Endothelial cell of umbilical vein (primary cell): ENCODE measurements at regions of chr7 and their contacts with region 1.

Region 1: DNA sequence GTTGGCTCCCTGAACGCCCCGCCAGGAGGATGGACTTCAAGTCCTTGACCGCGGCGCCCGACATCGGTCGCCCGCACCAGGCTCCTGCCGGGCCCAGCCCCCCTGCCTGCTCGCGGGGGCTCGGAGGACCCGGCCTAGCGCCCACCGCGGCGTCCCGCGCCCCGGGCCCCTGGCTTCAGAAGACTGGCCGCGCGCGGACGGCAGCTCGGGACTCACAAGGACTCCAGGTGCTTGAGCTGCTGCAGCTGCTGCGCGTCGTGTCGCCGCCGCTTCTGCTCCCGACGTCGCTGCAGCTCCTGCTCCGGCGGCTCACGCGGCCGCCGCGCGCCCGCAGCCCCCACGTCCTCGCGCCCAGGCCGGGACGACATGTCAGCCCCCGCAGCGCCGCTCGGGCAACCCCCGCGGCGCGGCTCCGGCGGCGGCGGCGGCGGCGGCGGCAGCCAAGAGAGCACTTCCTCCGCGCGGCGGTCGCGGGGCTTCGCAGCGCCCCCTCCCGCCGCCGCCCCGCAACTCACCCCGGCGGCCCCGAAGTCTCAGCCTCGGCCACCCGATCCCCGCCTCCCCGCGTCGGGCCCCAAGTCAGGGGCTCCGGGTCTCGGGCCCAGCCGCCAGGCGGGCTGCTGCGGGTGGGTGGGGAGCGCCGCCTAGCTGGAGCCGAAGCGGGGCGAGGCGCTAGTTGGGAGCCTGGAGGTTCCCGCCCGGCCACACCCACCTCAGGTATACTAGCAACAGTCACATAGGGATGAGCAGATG is at the start of gene RP9:
- DNase-seq: peak; percentile 70
- H3K4me3 ChIP-seq: peak within 1 kb of the TSS; percentile 56 to 93 (median 75)
- H3K27ac ChIP-seq: peak within 1 kb of the TSS; percentile 40
- H3K4me1 ChIP-seq: peaks cover 21% of the 10 kb centered on the region
- H3K27me3 ChIP-seq: peaks cover 4 to 18% of the 10 kb centered on the region in 2 experiments
- CTCF ChIP-seq: peak; percentile 41 to 58
- POLR2A ChIP-seq: peak; percentile 46
- total RNA-seq, gene RP9: 18.5 and 20.9 TPM in 2 replicates

Region 2: GRCh38 chr7:32694182-32694581 is 415.0 kb before region 1 on chr7:
- CTCF ChIA-PET with region 1: interaction called, 20 read pairs
- POLR2A ChIA-PET with region 1: no interaction called
- dilution Hi-C with region 1: no loop called
- intact Hi-C with region 1: loop called (anchors 5 kb)
- DNase-seq: no peak
- H3K4me3 ChIP-seq: no peak overlapping the region
- H3K27ac ChIP-seq: no peak overlapping the region
- H3K4me1 ChIP-seq: no peaks in the 10 kb centered on the region
- H3K27me3 ChIP-seq: no peaks in the 10 kb centered on the region
- CTCF ChIP-seq: no peak
- POLR2A ChIP-seq: no peak

Region 3: GRCh38 chr7:32803406-32804141 is 305.6 kb before region 1 on chr7:
- CTCF ChIA-PET with region 1: interaction called, 35 read pairs
- POLR2A ChIA-PET with region 1: no interaction called
- dilution Hi-C with region 1: no loop called
- intact Hi-C with region 1: loop called (anchors 1 kb)
- DNase-seq: no peak
- H3K4me3 ChIP-seq: no peak overlapping the region
- H3K27ac ChIP-seq: no peak overlapping the region
- H3K4me1 ChIP-seq: no peaks in the 10 kb centered on the region
- H3K27me3 ChIP-seq: no peaks in the 10 kb centered on the region
- CTCF ChIP-seq: no peak
- POLR2A ChIP-seq: no peak

Region 4: GRCh38 chr7:32891800-32892520 is 217.2 kb before region 1 on chr7:
- CTCF ChIA-PET with region 1: interaction called, 4 read pairs
- POLR2A ChIA-PET with region 1: no interaction called
- dilution Hi-C with region 1: no loop called
- intact Hi-C with region 1: loop called (anchors 1 kb)
- DNase-seq: peak; percentile 96
- H3K4me3 ChIP-seq: peak overlapping the region in 2 of 3 experiments; percentile 68 to 90
- H3K27ac ChIP-seq: peak overlapping the region; percentile 99
- H3K4me1 ChIP-seq: peaks cover 46% of the 10 kb centered on the region
- H3K27me3 ChIP-seq: no peaks in the 10 kb centered on the region
- CTCF ChIP-seq: no peak
- POLR2A ChIP-seq: no peak

Region 5: GRCh38 chr7:32957326-32958045 is 151.7 kb before region 1 on chr7 and contains the start of gene FKBP9:
- CTCF ChIA-PET with region 1: interaction called, 15 read pairs
- POLR2A ChIA-PET with region 1: no interaction called
- dilution Hi-C with region 1: no loop called
- intact Hi-C with region 1: loop called (anchors 2 kb)
- DNase-seq: peak; percentile 82
- H3K4me3 ChIP-seq: peak within 1 kb of the TSS; percentile 50 to 89 (median 73)
- H3K27ac ChIP-seq: peak within 1 kb of the TSS; percentile 78
- H3K4me1 ChIP-seq: peaks cover 10% of the 10 kb centered on the region
- H3K27me3 ChIP-seq: no peaks in the 10 kb centered on the region
- CTCF ChIP-seq: no peak
- POLR2A ChIP-seq: peak; percentile 92
- total RNA-seq, gene FKBP9: 112 and 124 TPM in 2 replicates

Region 6: DNA sequence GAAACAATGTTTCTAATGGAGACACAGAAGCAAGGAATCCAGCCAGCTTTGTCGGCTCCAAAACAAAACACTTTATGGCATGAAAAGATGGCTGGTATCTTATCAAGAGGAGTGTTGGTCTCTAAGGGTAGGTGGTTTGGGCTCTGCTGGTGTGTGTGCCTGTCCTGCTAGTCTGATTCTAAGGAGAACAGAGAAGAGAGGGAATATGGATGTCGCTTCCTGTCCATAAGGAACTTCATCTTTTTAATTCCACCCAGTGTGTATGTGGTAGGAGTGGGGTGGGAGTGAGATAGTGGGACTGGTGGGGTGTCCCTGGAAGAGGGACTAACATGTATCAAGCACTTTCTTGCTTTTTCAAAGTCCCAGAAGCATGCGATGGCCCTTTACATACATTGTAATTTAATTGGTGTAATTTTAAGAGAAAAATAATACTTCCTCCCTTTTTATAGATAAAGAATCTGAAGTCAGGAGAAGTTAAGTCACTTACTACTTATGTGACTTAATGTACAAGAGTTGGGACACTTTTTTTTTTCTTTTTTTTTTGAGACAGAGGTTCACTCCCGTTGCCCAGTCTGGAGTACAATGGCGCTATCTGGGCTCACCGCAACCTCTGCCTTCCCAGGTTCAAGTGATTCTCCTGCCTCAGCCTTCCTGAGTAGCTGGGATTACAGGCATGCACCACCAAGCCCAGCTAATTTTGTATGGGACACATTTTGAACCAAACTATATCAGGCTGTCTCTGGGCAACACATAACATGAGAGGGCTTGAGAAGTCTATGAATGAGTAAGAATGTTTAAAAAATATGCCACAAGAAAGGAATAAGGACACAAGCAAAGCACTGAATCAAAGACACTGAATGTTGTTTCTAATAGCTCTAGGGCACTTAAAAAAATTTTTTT is 65.4 kb before region 1 on chr7:
- CTCF ChIA-PET with region 1: no interaction called
- POLR2A ChIA-PET with region 1: no interaction called
- dilution Hi-C with region 1: no loop called
- intact Hi-C with region 1: no loop called
- DNase-seq: no peak
- H3K4me3 ChIP-seq: no peak overlapping the region
- H3K27ac ChIP-seq: no peak overlapping the region
- H3K4me1 ChIP-seq: peaks cover 7% of the 10 kb centered on the region
- H3K27me3 ChIP-seq: no peaks in the 10 kb centered on the region
- CTCF ChIP-seq: no peak
- POLR2A ChIP-seq: no peak

Region 7: DNA sequence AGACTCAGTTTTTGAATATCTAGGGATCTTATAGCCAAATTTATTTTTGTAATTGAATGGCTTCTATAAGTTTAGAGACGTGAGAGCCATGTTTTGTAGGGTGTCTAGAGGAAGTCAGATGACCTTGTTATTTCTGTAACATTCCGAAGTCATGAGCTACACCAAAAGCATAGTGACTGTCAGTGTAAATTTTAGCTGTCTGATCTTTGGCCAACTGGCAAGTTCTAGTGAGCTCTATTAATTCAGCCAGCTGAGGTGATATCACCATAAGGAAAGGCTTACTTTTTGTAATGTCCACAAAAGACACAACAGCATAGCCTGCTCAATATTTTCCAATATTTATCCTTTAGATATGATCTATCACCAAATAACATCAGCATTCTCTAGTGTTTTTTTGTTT is 36.7 kb before region 1 on chr7:
- CTCF ChIA-PET with region 1: interaction called, 12 read pairs
- POLR2A ChIA-PET with region 1: no interaction called
- dilution Hi-C with region 1: no loop called
- intact Hi-C with region 1: no loop called
- DNase-seq: peak; percentile 69
- H3K4me3 ChIP-seq: no peak overlapping the region
- H3K27ac ChIP-seq: peak overlapping the region; percentile 7
- H3K4me1 ChIP-seq: peaks cover 10% of the 10 kb centered on the region
- H3K27me3 ChIP-seq: peaks cover 10 to 17% of the 10 kb centered on the region in 2 experiments
- CTCF ChIP-seq: no peak
- POLR2A ChIP-seq: no peak

Region 8: GRCh38 chr7:33578166-33578565 is 469.0 kb after region 1 on chr7:
- CTCF ChIA-PET with region 1: no interaction called
- POLR2A ChIA-PET with region 1: no interaction called
- dilution Hi-C with region 1: no loop called
- intact Hi-C with region 1: no loop called
- DNase-seq: peak; percentile 17
- H3K4me3 ChIP-seq: no peak overlapping the region
- H3K27ac ChIP-seq: no peak overlapping the region
- H3K4me1 ChIP-seq: peaks cover 6% of the 10 kb centered on the region
- H3K27me3 ChIP-seq: no peaks in the 10 kb centered on the region
- CTCF ChIP-seq: no peak
- POLR2A ChIP-seq: no peak